Activated naive CD4-positive, alpha-beta T cell treated with anti-CD3 and anti-CD28 coated beads, Interleukin-2, amount 10 ng/mL, durations not matched to agents 7 days and 5 days (primary cell): ENCODE measurements at regions of chr11 and their contacts with region 1.

Region 1: GRCh38 chr11:76598426-76598839 is 72.1 kb downstream of the LRRC32 start:
- DNase-seq: no peak
- H3K4me3 Mint-ChIP-seq: no peak overlapping the region
- H3K27ac Mint-ChIP-seq: no peak overlapping the region
- H3K4me1 Mint-ChIP-seq: peaks cover 39% of the 10 kb centered on the region
- H3K27me3 Mint-ChIP-seq: peaks cover 62% of the 10 kb centered on the region

Region 2: GRCh38 chr11:76391021-76391420 is 207.4 kb before region 1 on chr11:
- CTCF ChIA-PET with region 1: no interaction called
- DNase-seq: no peak
- H3K4me3 Mint-ChIP-seq: no peak overlapping the region
- H3K27ac Mint-ChIP-seq: no peak overlapping the region
- H3K4me1 Mint-ChIP-seq: no peaks in the 10 kb centered on the region
- H3K27me3 Mint-ChIP-seq: peaks cover 6% of the 10 kb centered on the region

Region 3: GRCh38 chr11:76670485-76671236 is 72.2 kb after region 1 on chr11 and contains the start of gene LRRC32:
- CTCF ChIA-PET with region 1: interaction called, 11 read pairs
- DNase-seq: peak; percentile 39
- H3K4me3 Mint-ChIP-seq: peak within 1 kb of the TSS; percentile 59
- H3K27ac Mint-ChIP-seq: no peak within 1 kb of the TSS
- H3K4me1 Mint-ChIP-seq: peaks cover 29% of the 10 kb centered on the region
- H3K27me3 Mint-ChIP-seq: peaks cover 63% of the 10 kb centered on the region